GM12878 (cell line): ENCODE measurements at regions of chr20 and their contacts with region 1.

Region 1: DNA sequence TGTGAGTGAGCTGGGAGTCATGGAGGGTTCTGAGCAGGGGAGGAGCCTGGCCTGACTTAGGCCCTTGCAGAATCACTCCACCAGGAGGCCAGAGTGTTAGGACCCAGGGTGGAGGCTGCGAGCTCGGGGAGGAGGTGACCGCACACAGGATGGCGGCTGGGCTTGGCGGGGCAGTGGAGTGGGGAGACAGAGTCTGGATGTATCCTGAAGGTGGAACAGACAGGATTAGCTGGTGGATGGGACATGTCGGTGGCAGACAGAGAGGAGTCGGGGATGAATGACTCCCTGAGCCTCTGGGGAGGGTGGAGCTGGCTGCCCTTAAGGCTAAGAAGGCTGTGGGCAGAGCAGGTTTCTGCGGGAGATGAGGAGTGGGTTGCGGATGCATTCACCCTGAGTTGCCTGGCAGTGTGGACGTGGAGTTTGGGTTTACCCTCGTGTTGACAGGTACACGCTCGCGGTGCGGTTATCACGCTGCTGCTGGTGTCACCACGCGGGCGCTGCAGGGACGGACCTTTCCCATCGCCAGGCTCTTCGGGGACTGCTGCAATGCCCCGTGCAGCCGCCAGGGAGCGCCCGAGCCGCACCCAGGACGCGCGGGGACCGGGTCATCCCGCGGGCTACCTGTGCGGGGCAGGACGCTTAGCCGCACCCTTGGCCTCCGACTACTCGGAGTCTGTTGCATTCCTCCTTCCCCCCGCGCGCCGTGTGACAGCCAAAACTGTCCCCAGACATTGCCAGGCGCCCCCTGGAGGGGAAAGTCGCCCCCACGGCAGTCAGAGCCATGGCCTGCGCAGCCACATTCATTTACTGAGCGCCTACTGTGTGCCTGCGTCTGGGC is 43.0 kb upstream of the PTGIS start:
- DNase-seq: no peak
- ATAC-seq: peak; percentile 87
- H3K4me3 ChIP-seq: peak overlapping the region; percentile 46; the same call in 1 of the 2 replicates
- H3K27ac ChIP-seq: no peak overlapping the region
- H3K4me1 ChIP-seq: peaks cover 11% of the 10 kb centered on the region
- H3K27me3 ChIP-seq: no peaks in the 10 kb centered on the region
- CTCF ChIP-seq: peak; percentile 97 to 99 (median 99)
- EP300 ChIP-seq: no peak
- POLR2A ChIP-seq: no peak
- RAD21 ChIP-seq: peak; percentile 94

Region 2: GRCh38 chr20:49330544-49331239 is 280.2 kb before region 1 on chr20:
- CTCF ChIA-PET with region 1: interaction called, 5 read pairs
- POLR2A ChIA-PET with region 1: no interaction called
- RAD21 ChIA-PET with region 1: no interaction called
- SMC1A ChIA-PET with region 1: interaction called, 3 read pairs
- in situ Hi-C with region 1: loop called (anchors 5 kb)
- intact Hi-C with region 1: loop called (anchors 1 kb)
- DNase-seq: no peak
- ATAC-seq: no peak
- H3K4me3 ChIP-seq: no peak overlapping the region
- H3K27ac ChIP-seq: no peak overlapping the region
- H3K4me1 ChIP-seq: no peaks in the 10 kb centered on the region
- H3K27me3 ChIP-seq: peaks cover 0 to 5% of the 10 kb centered on the region in 2 experiments; a peak in 3 of 4 replicates
- CTCF ChIP-seq: no peak
- EP300 ChIP-seq: no peak
- POLR2A ChIP-seq: no peak
- RAD21 ChIP-seq: no peak

Region 3: GRCh38 chr20:49516916-49517789 is 93.8 kb before region 1 on chr20:
- CTCF ChIA-PET with region 1: no interaction called
- POLR2A ChIA-PET with region 1: no interaction called
- RAD21 ChIA-PET with region 1: no interaction called
- SMC1A ChIA-PET with region 1: no interaction called
- in situ Hi-C with region 1: no loop called
- intact Hi-C with region 1: no loop called
- DNase-seq: no peak
- ATAC-seq: no peak
- H3K4me3 ChIP-seq: no peak overlapping the region
- H3K27ac ChIP-seq: no peak overlapping the region
- H3K4me1 ChIP-seq: no peaks in the 10 kb centered on the region
- H3K27me3 ChIP-seq: peaks cover 0 to 5% of the 10 kb centered on the region in 2 experiments; a peak in 2 of 4 replicates
- CTCF ChIP-seq: no peak
- EP300 ChIP-seq: no peak
- POLR2A ChIP-seq: no peak
- RAD21 ChIP-seq: no peak

Region 4: DNA sequence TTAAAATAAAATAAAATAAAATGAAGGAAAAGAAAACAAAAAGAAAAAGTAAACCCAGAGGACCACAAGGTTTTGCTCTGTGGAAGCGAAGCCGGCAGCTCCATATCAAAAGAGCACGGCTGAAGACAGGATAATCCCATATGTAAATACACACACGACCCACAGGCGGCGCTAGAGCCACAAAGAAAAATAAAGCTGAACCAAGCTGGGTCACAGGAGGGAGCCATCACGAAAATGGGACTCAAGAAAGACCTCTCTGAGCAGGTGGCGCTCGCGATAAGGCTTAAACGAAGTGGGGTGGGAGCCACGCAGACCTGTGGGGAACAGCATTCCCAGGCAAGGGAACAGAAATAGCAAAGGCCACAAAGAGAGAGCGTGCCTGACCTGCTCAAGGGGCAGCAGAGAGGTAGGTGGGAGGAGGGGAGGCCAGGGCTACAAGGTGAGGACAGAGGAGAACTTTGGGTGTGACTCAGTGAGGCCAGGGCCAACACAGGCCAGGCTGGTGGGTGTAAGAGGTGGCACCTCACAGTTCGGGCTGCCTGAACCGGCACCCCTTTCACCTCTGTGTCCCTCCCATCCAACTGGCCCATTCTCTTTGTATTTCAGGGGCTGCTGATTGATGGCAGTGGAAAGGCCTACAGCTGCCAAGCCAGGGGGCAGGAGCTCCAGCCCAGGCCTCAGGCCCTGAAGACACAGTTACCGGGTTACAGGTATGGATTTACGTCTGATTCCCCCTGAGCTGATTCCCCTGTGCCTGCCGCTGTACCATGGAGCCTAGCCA is 69.0 kb before region 1 on chr20:
- CTCF ChIA-PET with region 1: interaction called, 148 read pairs
- POLR2A ChIA-PET with region 1: no interaction called
- RAD21 ChIA-PET with region 1: interaction called, 51 read pairs
- SMC1A ChIA-PET with region 1: interaction called, 30 read pairs
- in situ Hi-C with region 1: loop called (anchors 5 kb)
- intact Hi-C with region 1: loop called (anchors 1 kb)
- DNase-seq: peak; percentile 35
- ATAC-seq: peak; percentile 91
- H3K4me3 ChIP-seq: no peak overlapping the region
- H3K27ac ChIP-seq: no peak overlapping the region
- H3K4me1 ChIP-seq: no peaks in the 10 kb centered on the region
- H3K27me3 ChIP-seq: no peaks in the 10 kb centered on the region
- CTCF ChIP-seq: peak; percentile 79 to 95 (median 95)
- EP300 ChIP-seq: no peak
- POLR2A ChIP-seq: no peak
- RAD21 ChIP-seq: peak; percentile 91

Region 5: DNA sequence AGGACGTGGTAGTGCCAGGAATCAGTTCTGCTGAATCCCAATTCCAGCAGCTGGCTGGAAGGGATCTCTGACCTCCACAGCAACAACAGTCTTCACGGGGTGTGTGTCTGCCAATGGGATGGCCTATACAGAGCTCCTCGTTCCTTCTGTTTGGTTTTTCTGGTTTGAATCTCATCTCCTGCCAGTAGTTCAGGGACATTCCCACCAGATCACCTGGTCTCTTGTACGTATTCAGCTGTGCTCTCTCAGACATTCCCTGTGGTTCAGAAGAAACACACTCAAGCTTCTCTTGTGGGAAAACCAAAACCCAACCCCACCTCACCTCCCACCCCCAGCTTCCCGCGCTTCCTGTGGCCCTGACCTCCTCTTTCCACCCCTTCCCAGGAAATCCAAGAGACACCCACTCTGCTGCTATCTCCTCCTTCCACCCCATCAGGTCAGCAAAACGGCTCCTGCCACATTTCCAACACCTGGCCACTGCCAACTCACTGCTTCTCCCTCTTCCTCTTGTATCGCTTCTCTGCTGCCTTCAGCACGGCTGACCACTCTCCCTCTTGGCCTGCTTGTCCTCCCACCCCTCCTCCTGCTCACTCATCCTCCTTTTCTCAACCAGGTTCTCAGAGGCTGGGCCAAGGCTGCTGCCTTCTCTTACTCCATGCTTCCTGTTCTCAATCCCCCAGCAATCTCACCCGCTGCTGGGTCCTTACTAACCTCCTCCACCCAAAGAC is 20.3 kb after region 1 on chr20:
- CTCF ChIA-PET with region 1: interaction called, 22 read pairs
- POLR2A ChIA-PET with region 1: no interaction called
- RAD21 ChIA-PET with region 1: interaction called, 7 read pairs
- SMC1A ChIA-PET with region 1: interaction called, 11 read pairs
- in situ Hi-C with region 1: no loop called
- intact Hi-C with region 1: no loop called
- DNase-seq: no peak
- ATAC-seq: peak; percentile 75
- H3K4me3 ChIP-seq: no peak overlapping the region
- H3K27ac ChIP-seq: peak overlapping the region; percentile 77
- H3K4me1 ChIP-seq: peaks cover 53% of the 10 kb centered on the region
- H3K27me3 ChIP-seq: no peaks in the 10 kb centered on the region
- CTCF ChIP-seq: no peak
- EP300 ChIP-seq: peak in 1 of 2 experiments; percentile 39; a peak in 1 of 4 replicates
- POLR2A ChIP-seq: no peak; the same call in 1 of the 2 replicates
- RAD21 ChIP-seq: no peak

Region 6: DNA sequence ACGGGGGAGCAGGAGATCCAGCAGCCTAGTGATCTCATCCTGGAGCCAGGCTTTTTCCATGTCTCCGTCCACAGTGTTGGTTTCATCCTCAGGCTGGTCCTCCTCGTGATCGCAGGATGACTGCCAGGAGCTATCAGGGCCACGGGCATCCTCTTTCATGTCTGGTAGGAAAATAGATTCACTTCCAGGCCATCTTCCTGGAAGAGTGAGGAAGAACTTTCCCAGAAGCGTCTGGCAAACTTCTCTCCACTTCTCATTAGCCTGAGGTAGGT is 186.4 kb after region 1 on chr20:
- CTCF ChIA-PET with region 1: interaction called, 3 read pairs
- POLR2A ChIA-PET with region 1: no interaction called
- RAD21 ChIA-PET with region 1: interaction called, 7 read pairs
- SMC1A ChIA-PET with region 1: interaction called, 12 read pairs
- in situ Hi-C with region 1: no loop called
- intact Hi-C with region 1: no loop called
- DNase-seq: no peak
- ATAC-seq: no peak
- H3K4me3 ChIP-seq: no peak overlapping the region
- H3K27ac ChIP-seq: no peak overlapping the region
- H3K4me1 ChIP-seq: peaks cover 18% of the 10 kb centered on the region
- H3K27me3 ChIP-seq: no peaks in the 10 kb centered on the region
- CTCF ChIP-seq: no peak
- EP300 ChIP-seq: no peak
- POLR2A ChIP-seq: no peak
- RAD21 ChIP-seq: no peak

Region 7: GRCh38 chr20:49888345-49888966 is 277.5 kb after region 1 on chr20:
- CTCF ChIA-PET with region 1: interaction called, 21 read pairs
- POLR2A ChIA-PET with region 1: no interaction called
- RAD21 ChIA-PET with region 1: interaction called, 12 read pairs
- SMC1A ChIA-PET with region 1: interaction called, 44 read pairs
- in situ Hi-C with region 1: no loop called
- intact Hi-C with region 1: loop called (anchors 1 kb)
- DNase-seq: peak; percentile 9
- ATAC-seq: peak; percentile 88
- H3K4me3 ChIP-seq: no peak overlapping the region
- H3K27ac ChIP-seq: no peak overlapping the region
- H3K4me1 ChIP-seq: peaks cover 13% of the 10 kb centered on the region
- H3K27me3 ChIP-seq: no peaks in the 10 kb centered on the region
- CTCF ChIP-seq: peak; percentile 81 to 85 (median 84)
- EP300 ChIP-seq: no peak
- POLR2A ChIP-seq: no peak
- RAD21 ChIP-seq: peak; percentile 89

Region 8: GRCh38 chr20:49928401-49929141 is 317.7 kb after region 1 on chr20:
- CTCF ChIA-PET with region 1: interaction called, 5 read pairs
- POLR2A ChIA-PET with region 1: no interaction called
- RAD21 ChIA-PET with region 1: no interaction called
- SMC1A ChIA-PET with region 1: interaction called, 3 read pairs
- in situ Hi-C with region 1: loop called (anchors 5 kb)
- intact Hi-C with region 1: loop called (anchors 2 kb)
- DNase-seq: no peak
- ATAC-seq: peak; percentile 93
- H3K4me3 ChIP-seq: no peak overlapping the region
- H3K27ac ChIP-seq: no peak overlapping the region
- H3K4me1 ChIP-seq: no peaks in the 10 kb centered on the region
- H3K27me3 ChIP-seq: no peaks in the 10 kb centered on the region
- CTCF ChIP-seq: peak; percentile 85 to 90 (median 88)
- EP300 ChIP-seq: no peak
- POLR2A ChIP-seq: no peak
- RAD21 ChIP-seq: peak; percentile 81